Lower leg skin (tissue), 4 donors: ENCODE measurements at regions of chr3 and their contacts with region 1.

Region 1: DNA sequence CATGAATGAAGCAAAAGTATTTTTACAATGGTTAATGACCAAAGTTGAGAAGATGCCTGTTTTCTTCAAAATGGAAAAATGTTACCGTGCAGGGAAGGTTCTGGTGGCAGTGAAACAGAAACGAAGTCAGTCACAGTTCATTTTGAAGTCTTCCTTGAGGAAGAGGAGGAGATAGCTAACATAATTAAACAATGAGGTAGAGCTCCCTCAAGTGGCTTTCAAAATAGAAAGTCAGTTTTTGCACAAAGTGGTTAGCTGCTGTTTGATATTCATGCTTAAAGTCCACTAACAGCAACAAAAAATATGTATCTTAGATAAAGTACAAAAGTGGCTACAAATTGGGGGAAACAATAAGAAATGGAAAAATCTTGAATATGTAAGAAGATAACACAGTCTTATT is 87.3 kb downstream of the TFG start:
- DNase-seq: no peak
- H3K4me3 ChIP-seq: no peak overlapping the region
- CTCF ChIP-seq: no peak
- POLR2A ChIP-seq: no peak

Region 2: DNA sequence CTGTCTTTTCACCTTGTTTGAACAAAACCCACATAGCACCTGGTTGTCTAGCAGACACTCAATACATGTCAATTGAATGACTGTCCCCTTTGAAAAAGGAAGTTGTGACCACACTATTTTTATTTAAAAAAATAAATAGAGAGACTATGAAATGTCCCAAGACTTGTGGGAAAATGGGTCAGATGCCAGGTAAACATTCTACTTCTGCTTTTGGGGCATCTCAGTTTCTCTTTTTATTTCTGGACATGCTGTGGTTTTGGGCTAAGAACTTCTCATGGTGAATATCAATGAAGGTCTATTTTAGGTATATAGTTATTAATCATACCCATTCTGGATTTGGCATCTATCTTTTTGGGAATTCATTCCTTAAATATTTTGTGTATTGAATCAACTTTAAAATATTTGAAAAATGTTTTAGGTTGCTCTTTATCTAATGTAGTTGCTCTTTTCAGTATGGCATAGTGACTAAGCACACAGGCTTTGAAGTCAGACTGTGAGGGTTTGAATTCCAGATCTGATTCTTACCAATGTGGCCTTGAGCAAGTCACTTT is 299.8 kb before region 1 on chr3:
- intact Hi-C with region 1: no loop called
- DNase-seq: no peak
- H3K4me3 ChIP-seq: no peak overlapping the region
- CTCF ChIP-seq: no peak
- POLR2A ChIP-seq: no peak

Region 3: GRCh38 chr3:100776746-100777145 is 19.8 kb before region 1 on chr3:
- intact Hi-C with region 1: loop called (anchors 1 kb)
- DNase-seq: no peak
- H3K4me3 ChIP-seq: no peak overlapping the region
- CTCF ChIP-seq: no peak
- POLR2A ChIP-seq: no peak